Lower leg skin (tissue), 4 donors: ENCODE measurements at regions of chr1 and their contacts with region 1.

Region 1: GRCh38 chr1:243596431-243597062 is 253.5 kb downstream of the AKT3 start:
- DNase-seq: no peak
- H3K4me3 ChIP-seq: no peak overlapping the region
- CTCF ChIP-seq: no peak
- POLR2A ChIP-seq: no peak

Region 2: DNA sequence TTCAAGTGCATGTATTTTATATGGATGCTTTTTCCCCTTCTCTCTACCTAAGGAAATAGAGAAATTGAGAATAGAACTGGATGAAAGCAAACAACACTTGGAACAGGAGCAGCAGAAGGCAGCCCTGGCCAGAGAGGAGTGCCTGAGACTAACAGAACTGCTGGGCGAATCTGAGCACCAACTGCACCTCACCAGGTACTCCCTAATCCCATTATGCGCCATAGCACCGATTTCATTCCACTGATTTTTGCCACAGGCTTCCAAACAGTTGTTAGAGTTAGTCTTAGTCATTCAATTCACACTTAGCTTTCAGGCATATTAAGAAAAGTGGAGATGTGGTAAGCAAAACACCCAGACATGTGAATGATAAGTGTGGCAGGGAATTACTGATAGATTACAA is 217.9 kb before region 1 on chr1:
- intact Hi-C with region 1: no loop called
- DNase-seq: no peak
- H3K4me3 ChIP-seq: no peak overlapping the region
- CTCF ChIP-seq: no peak
- POLR2A ChIP-seq: no peak

Region 3: DNA sequence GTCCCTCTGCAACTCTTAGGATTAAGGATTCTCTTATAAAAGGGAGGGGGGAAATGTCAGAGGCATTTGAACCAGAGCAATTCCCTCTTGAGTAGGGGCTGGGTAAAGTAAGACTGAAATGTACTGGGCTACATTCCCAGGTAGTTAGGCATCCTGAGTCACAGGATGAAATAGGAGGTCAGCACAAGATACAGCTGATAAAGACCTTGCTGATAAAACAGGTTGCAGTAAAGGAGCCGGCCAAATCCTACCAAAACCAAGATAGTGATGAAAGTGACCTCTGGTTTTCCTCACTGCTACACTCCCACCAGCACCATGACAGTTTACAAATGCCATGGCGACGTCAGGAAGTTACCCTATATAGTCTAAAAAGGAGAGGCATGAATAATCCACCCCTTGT is 1224.6 kb after region 1 on chr1:
- intact Hi-C with region 1: loop called (anchors 10 kb)
- DNase-seq: no peak
- H3K4me3 ChIP-seq: no peak overlapping the region
- CTCF ChIP-seq: no peak
- POLR2A ChIP-seq: no peak